ENCODE measurements at regions of chr16 and their contacts with region 1.

Region 1: DNA sequence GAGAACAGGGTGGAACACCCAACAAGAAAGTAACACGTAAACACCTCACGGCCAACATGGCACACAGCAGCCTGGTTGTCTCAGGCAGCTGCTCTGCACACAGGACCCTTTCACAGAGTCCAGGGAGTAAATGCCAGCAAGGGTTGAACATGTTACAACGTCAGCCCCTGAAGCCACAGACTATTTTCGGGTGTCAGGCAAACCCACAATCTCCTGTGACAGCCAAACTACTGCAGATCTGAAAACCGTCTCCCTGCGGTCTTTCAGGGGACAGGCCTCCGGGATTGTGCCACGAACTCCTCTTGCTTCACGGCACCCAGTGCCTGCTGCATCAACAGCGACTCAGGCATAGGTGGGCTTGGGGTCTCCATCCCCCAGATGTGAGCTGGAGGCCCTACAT is 127.7 kb downstream of the XYLT1 start:
- DNase-seq: peak; percentile 63
- ATAC-seq: peak; percentile 81
- H3K4me3 ChIP-seq: no peak overlapping the region
- H3K27ac ChIP-seq: peak overlapping the region; percentile 52
- H3K4me1 ChIP-seq: peaks cover 68% of the 10 kb centered on the region
- H3K27me3 ChIP-seq: no peaks in the 10 kb centered on the region
- CTCF ChIP-seq: no peak
- EP300 ChIP-seq: peak; percentile 88 to 96
- POLR2A ChIP-seq: peak; percentile 19; the same call in 1 of the 2 replicates
- RAD21 ChIP-seq: peak; percentile 25; the same call in 1 of the 2 replicates

Region 2: GRCh38 chr16:17283016-17283415 is 60.0 kb before region 1 on chr16:
- CTCF ChIA-PET with region 1: interaction called, 9 read pairs
- POLR2A ChIA-PET with region 1: interaction called, 3 read pairs
- RAD21 ChIA-PET with region 1: interaction called, 23 read pairs
- SMC1A ChIA-PET with region 1: interaction called, 17 read pairs
- in situ Hi-C with region 1: no loop called
- intact Hi-C with region 1: no loop called
- DNase-seq: no peak
- ATAC-seq: no peak
- H3K4me3 ChIP-seq: no peak overlapping the region
- H3K27ac ChIP-seq: no peak overlapping the region
- H3K4me1 ChIP-seq: peaks cover 23% of the 10 kb centered on the region
- H3K27me3 ChIP-seq: no peaks in the 10 kb centered on the region
- CTCF ChIP-seq: no peak
- EP300 ChIP-seq: no peak
- POLR2A ChIP-seq: no peak
- RAD21 ChIP-seq: no peak

Region 3: DNA sequence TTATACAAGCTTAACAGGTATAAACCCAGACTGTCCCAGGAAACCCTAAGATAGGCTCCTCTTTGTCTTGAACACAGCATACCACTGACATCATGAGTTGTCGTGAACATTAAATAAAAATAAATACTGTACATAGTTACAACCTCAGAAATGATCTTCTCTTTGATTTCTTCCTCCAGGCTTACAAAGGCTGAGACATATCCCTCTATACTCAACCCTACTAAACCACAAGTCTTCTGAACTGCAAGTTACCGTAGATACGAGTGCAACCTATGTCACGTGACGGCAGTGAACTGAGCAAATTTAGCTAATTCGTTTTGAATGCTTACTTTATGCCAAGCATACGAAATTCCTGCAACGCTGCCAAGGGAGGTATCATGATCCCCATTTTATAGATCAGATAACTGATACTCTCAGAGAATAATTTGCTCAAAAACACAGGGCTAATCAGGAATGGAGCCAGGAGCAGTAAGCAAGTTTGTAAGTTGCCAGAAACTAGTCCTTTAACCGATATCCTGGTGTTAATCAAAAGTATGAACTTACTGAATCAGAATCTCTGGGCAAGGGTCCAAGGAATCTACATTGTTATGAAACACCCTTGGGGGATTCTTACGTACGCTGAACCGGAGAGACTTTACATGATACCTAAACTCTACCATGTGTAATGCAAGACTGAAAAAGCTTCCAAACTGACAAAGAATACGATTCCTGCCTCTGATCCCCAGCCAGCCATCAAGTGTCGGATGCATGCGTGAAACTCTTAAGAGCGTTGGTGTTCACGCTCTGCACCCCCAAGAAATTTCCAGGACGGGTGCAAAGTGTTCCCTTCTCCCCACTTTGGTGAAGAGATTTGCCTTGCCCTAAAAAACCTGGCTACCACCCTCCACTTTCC is 21.5 kb after region 1 on chr16:
- CTCF ChIA-PET with region 1: interaction called, 47 read pairs
- POLR2A ChIA-PET with region 1: interaction called, 46 read pairs
- RAD21 ChIA-PET with region 1: interaction called, 162 read pairs
- SMC1A ChIA-PET with region 1: interaction called, 303 read pairs
- in situ Hi-C with region 1: no loop called
- intact Hi-C with region 1: no loop called
- DNase-seq: no peak
- ATAC-seq: no peak
- H3K4me3 ChIP-seq: no peak overlapping the region
- H3K27ac ChIP-seq: no peak overlapping the region
- H3K4me1 ChIP-seq: peaks cover 39% of the 10 kb centered on the region
- H3K27me3 ChIP-seq: no peaks in the 10 kb centered on the region
- CTCF ChIP-seq: no peak
- EP300 ChIP-seq: no peak
- POLR2A ChIP-seq: no peak
- RAD21 ChIP-seq: no peak

Region 4: DNA sequence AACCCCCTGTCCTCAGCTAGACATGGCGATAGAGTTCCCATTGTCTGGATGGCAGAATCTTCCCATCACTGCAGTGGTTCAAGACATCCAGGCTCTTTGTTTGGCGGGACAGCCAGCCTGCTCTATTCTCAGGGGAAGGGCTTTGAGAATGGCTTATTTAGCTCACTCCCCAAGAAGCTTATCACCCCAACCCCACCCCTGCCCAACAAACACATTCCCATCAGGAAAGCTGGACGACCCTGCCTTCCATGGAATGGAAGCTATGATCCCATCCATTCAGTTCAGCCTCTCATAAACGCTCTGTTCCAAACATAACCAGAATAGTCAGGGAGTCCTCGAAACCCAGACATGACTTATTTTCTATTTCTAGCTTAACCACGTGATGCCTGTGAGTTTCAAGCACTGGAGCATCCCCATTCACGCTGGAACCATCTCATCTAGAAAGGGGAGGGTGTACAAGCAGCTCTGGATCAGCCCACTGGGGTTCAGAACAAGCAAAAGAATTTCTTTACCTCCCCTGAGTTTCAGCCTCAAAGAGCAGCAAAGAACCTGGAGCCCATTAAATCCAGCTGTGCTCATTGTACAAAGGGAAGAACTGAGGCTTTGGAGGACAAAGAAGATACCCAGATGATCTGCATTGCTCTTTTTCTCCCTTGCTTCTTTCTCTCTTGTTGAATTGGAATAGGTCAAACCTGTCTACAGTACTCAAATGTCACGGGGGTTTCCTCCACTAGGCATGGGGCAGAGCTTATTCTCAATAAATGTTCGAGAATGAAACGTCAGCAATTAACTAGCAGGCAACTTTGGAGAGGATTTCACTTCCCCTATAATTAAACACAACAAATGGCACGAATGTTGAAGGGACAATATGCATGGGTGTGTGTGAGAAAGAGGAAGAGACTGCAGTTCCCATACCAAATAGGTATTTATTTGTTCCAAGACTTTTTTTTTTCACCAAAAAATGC is 34.6 kb after region 1 on chr16:
- CTCF ChIA-PET with region 1: interaction called, 47 read pairs
- POLR2A ChIA-PET with region 1: interaction called, 46 read pairs
- RAD21 ChIA-PET with region 1: interaction called, 162 read pairs
- SMC1A ChIA-PET with region 1: interaction called, 303 read pairs
- in situ Hi-C with region 1: no loop called
- intact Hi-C with region 1: no loop called
- DNase-seq: peak; percentile 80
- ATAC-seq: peak; percentile 90
- H3K4me3 ChIP-seq: 0 out of 2 replicates have a peak overlapping the region, but pooled peaks have one; percentile 43
- H3K27ac ChIP-seq: peak overlapping the region; percentile 72
- H3K4me1 ChIP-seq: peaks cover 35% of the 10 kb centered on the region
- H3K27me3 ChIP-seq: no peaks in the 10 kb centered on the region
- CTCF ChIP-seq: no peak
- EP300 ChIP-seq: peak; percentile 84 to 91; a peak in 2 of 4 replicates
- POLR2A ChIP-seq: no peak
- RAD21 ChIP-seq: peak; percentile 21; the same call in 1 of the 2 replicates

Region 5: DNA sequence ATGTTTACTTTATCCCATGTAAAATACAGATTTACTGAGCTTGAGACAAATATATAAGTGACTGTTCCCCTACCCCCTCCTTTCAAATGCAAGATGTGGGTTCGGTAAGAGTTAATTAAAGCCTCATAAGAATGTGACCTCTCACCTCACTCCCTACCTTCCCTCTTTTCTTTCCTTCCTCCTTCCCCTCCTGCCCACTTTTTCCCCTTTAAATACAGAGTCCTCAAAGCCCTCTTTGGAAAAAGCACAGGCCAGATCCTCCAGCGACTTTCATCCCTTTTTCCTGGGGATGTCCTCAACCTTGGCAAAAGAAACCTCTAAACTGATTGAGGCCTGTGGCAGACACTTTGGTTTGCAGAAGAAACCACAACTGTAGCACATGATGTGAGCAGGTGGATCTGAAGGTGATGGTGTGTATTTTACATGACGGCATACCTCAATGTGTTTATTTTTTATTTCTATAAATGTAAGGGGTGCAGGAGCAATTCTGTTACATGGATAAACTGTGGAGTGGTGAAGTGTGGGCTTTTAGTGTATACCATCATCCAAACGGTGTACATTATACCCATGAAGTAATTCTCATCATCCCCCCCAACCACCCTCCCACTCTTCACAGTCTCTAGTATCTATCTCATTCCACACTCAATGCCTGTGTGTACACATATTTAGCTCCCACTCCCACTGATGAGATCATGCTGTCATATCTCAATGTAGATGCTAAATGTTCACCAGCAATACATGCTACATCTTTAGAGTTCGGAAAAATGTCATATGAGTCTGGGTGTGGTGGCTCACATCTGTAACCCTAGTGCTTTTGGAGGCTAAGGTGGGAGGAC is 50.0 kb after region 1 on chr16:
- CTCF ChIA-PET with region 1: no interaction called
- POLR2A ChIA-PET with region 1: no interaction called
- RAD21 ChIA-PET with region 1: no interaction called
- SMC1A ChIA-PET with region 1: no interaction called
- in situ Hi-C with region 1: no loop called
- intact Hi-C with region 1: no loop called
- DNase-seq: no peak
- ATAC-seq: no peak
- H3K4me3 ChIP-seq: no peak overlapping the region
- H3K27ac ChIP-seq: no peak overlapping the region
- H3K4me1 ChIP-seq: no peaks in the 10 kb centered on the region
- H3K27me3 ChIP-seq: no peaks in the 10 kb centered on the region
- CTCF ChIP-seq: no peak
- EP300 ChIP-seq: no peak
- POLR2A ChIP-seq: no peak
- RAD21 ChIP-seq: no peak

Region 6: GRCh38 chr16:17416461-17417311 is 73.7 kb after region 1 on chr16:
- CTCF ChIA-PET with region 1: interaction called, 10 read pairs
- POLR2A ChIA-PET with region 1: interaction called, 7 read pairs
- RAD21 ChIA-PET with region 1: interaction called, 12 read pairs
- SMC1A ChIA-PET with region 1: interaction called, 26 read pairs
- in situ Hi-C with region 1: no loop called
- intact Hi-C with region 1: no loop called
- DNase-seq: peak; percentile 89
- ATAC-seq: peak; percentile 95
- H3K4me3 ChIP-seq: peak overlapping the region; percentile 34; the same call in 1 of the 2 replicates
- H3K27ac ChIP-seq: peak overlapping the region; percentile 90
- H3K4me1 ChIP-seq: peaks cover 51% of the 10 kb centered on the region
- H3K27me3 ChIP-seq: no peaks in the 10 kb centered on the region
- CTCF ChIP-seq: peak; percentile 23 to 38 (median 26); a peak in 5 of 6 replicates
- EP300 ChIP-seq: peak; percentile 83 to 90
- POLR2A ChIP-seq: peak; percentile 73
- RAD21 ChIP-seq: peak; percentile 59

Measured in GM12878 (cell line).